Activated CD4-positive, alpha-beta memory T cell treated with anti-CD3 and anti-CD28 coated beads, Interleukin-2, amount 10 ng/mL, durations not matched to agents 7 days and 5 days (primary cell): ENCODE measurements at regions of chr14 and their contacts with region 1.

Region 1: GRCh38 chr14:63632932-63633514 is 8.6 kb downstream of the WDR89 start:
- DNase-seq: no peak
- H3K4me3 Mint-ChIP-seq: no peak overlapping the region
- H3K27ac Mint-ChIP-seq: no peak overlapping the region
- H3K4me1 Mint-ChIP-seq: peaks cover 24% of the 10 kb centered on the region
- H3K27me3 Mint-ChIP-seq: no peaks in the 10 kb centered on the region

Region 2: DNA sequence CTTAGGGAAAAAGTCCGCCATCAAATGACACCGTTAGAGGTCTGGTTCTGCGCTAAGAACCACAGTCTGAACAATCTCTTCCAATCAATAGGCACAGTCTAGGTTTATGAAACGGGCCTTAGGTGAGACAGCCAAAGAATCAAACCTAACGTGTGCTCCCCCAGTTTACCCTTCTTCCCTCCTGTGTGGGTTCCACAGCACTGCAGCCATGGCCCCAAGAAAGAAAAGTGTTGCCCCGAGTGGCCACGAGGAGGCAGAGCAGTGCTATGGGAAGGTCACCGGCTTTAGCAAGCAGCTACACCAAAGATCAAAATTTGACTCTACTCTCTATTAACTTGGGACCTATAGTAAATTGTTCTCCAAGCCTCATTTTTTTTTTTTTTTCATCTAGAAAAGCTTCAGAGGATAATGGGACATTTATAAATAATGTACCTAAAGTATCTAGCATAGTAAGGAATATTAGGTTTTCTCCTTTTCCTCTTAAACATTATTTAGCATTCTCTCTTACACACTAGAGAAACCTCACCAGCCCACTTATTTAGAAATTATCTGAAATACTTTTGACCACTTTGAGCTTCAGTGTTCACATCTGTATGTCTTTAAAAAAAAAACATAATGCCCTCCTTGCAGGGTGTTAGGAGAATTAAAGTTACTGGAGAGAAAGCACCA is 244.1 kb before region 1 on chr14:
- CTCF ChIA-PET with region 1: interaction called, 11 read pairs
- POLR2A ChIA-PET with region 1: no interaction called
- DNase-seq: peak; percentile 72
- H3K4me3 Mint-ChIP-seq: no peak overlapping the region
- H3K27ac Mint-ChIP-seq: no peak overlapping the region
- H3K4me1 Mint-ChIP-seq: peaks cover 13% of the 10 kb centered on the region
- H3K27me3 Mint-ChIP-seq: no peaks in the 10 kb centered on the region

Region 3: GRCh38 chr14:63713765-63714164 is 80.7 kb after region 1 on chr14:
- CTCF ChIA-PET with region 1: no interaction called
- POLR2A ChIA-PET with region 1: no interaction called
- DNase-seq: no peak
- H3K4me3 Mint-ChIP-seq: no peak overlapping the region
- H3K27ac Mint-ChIP-seq: no peak overlapping the region
- H3K4me1 Mint-ChIP-seq: peaks cover 19% of the 10 kb centered on the region
- H3K27me3 Mint-ChIP-seq: no peaks in the 10 kb centered on the region